Activated T-helper 1 cell treated with anti-CD3 and anti-CD28 coated beads, Interleukin-12 subunit alpha, Interleukin-12 subunit beta, Interleukin-2, Interleukin-4 antibody, amounts not matched to agents 30 ng/mL and 10 ng/mL and 1 ng/mL, durations not matched to agents 14 hours and 24 hours and 36 hours (primary cell): ENCODE measurements at regions of chr9 and their contacts with region 1.

Region 1: DNA sequence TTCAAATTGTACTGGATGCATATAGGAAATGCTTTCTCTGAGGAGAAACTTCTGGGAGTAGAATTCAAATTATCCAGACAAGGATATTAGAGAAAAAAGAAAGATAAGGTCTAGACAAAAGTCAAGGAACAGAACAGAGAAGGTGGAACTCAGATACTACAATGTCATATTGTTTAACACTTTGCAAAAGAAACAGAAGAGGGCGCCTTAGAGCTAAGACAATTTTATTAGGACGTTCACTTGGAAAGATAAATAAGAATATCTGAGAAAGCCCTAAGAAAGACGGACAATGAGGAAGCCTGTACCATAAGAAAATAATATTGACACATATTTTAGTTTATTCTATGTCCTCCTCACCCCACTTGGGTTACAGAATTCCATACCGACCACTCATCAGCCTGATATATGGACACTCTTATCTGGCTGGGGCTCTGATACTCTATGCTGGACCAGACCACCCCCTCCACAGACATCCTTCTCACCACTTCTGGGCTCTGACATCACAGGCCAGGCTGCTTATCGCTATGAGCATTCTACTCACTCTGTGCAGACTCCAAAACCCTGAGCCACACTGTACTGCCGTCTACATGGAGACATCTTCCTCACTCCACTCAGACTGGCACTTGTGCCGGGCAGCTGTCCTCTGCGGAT is 9.1 kb upstream of the AK3 start:
- DNase-seq: no peak
- H3K4me3 Mint-ChIP-seq: no peak overlapping the region
- H3K27ac Mint-ChIP-seq: no peak overlapping the region
- H3K4me1 Mint-ChIP-seq: peaks cover 9% of the 10 kb centered on the region
- H3K27me3 Mint-ChIP-seq: peaks cover 5% of the 10 kb centered on the region

Region 2: GRCh38 chr9:4382722-4383317 is 367.3 kb before region 1 on chr9:
- intact Hi-C with region 1: loop called (anchors 10 kb)
- DNase-seq: no peak
- H3K4me3 Mint-ChIP-seq: no peak overlapping the region
- H3K27ac Mint-ChIP-seq: no peak overlapping the region
- H3K4me1 Mint-ChIP-seq: no peaks in the 10 kb centered on the region
- H3K27me3 Mint-ChIP-seq: peaks cover 4% of the 10 kb centered on the region

Region 3: DNA sequence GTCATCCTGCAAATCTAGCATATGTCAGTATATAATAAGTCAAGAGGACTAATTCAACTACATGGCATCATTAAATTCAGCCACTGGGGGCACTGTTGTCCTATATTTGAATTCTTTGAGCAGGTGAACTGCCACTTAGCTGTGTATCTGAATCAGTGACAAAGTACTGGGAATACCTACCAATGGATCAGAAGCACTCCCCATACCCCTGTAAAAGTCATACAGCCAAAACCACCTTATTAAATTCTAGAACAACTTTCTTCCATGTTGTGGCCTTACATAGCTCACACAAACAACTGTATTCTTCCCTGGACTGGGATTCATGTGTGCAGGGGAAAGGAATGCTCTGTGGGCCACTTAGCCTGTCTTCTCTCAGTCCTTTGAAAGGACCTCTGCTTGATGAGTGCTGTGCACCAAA is 145.5 kb before region 1 on chr9:
- intact Hi-C with region 1: loop called (anchors 1 kb)
- DNase-seq: peak; percentile 56
- H3K4me3 Mint-ChIP-seq: no peak overlapping the region
- H3K27ac Mint-ChIP-seq: no peak overlapping the region
- H3K4me1 Mint-ChIP-seq: peaks cover 17% of the 10 kb centered on the region
- H3K27me3 Mint-ChIP-seq: peaks cover 5% of the 10 kb centered on the region

Region 4: GRCh38 chr9:4762108-4762885 is 12.1 kb after region 1 on chr9:
- intact Hi-C with region 1: no loop called
- DNase-seq: peak; percentile 72
- H3K4me3 Mint-ChIP-seq: peak overlapping the region; percentile 68
- H3K27ac Mint-ChIP-seq: peak overlapping the region; percentile 65
- H3K4me1 Mint-ChIP-seq: peaks cover 18% of the 10 kb centered on the region
- H3K27me3 Mint-ChIP-seq: no peaks in the 10 kb centered on the region

Region 5: DNA sequence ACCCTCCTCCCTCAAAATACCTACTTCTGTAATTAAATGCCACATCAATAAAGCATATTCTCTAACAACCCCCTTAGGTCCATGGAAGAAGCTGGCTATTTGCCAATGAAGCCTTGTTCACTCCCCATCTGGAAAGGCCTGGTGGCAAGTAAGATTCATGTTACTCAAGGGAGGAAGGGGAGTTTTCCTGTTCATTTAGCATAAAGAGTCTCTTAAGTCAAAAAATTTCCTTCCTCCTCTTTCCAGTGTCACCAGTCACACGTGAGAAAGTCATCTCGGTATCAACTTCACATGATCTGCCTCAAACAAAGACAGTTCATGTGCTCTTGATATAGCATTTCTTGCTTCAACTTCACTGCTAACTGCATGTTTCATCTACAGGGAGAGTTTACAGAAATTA is 846.0 kb after region 1 on chr9:
- intact Hi-C with region 1: loop called (anchors 2 kb)
- DNase-seq: no peak
- H3K4me3 Mint-ChIP-seq: no peak overlapping the region
- H3K27ac Mint-ChIP-seq: no peak overlapping the region
- H3K4me1 Mint-ChIP-seq: peaks cover 29% of the 10 kb centered on the region
- H3K27me3 Mint-ChIP-seq: no peaks in the 10 kb centered on the region